ENCODE measurements at regions of chr4 and their contacts with region 1.

Region 1: DNA sequence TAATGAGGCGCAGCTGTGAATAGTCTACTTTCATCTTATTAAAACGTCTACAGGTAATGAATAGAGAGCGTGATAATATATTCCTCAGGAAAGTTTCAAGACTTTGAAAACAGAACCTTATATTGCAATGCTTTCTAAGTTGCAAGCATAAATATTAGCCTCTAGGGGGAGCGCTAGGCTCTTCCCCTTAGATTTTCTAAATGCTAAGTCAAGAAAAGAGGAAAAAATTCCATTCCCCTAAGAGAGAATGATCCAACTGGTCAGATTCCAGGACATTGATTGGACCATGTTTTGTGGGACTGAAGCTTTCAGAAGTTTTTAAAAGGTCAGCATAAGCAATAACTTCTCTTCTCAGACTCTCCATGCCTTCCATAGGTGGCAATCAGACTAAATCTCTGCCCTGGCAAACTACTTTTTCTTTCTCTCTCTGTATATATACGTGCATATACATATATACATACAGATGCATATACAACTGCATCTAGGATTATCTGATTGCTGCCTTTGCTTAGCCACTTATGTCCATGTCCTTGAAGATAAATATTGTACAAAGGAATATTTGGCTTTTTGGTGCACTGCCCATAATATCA is 492.9 kb downstream of the INPP4B start:
- DNase-seq: peak; percentile 65 to 73 (median 65)
- H3K4me3 ChIP-seq: peak overlapping the region in 1 of 7 experiments; percentile 55
- H3K27ac ChIP-seq: no peak overlapping the region
- H3K4me1 ChIP-seq: peaks cover 15 to 42% (median 21%) of the 10 kb centered on the region in 4 experiments
- H3K27me3 ChIP-seq: no peaks in the 10 kb centered on the region

Region 2: GRCh38 chr4:141933978-141934377 is 419.3 kb before region 1 on chr4:
- CTCF ChIA-PET with region 1: no interaction called
- POLR2A ChIA-PET with region 1: no interaction called
- DNase-seq: no peak
- H3K4me3 ChIP-seq: no peak overlapping the region
- H3K27ac ChIP-seq: no peak overlapping the region
- H3K4me1 ChIP-seq: no peaks in the 10 kb centered on the region
- H3K27me3 ChIP-seq: no peaks in the 10 kb centered on the region

Region 3: DNA sequence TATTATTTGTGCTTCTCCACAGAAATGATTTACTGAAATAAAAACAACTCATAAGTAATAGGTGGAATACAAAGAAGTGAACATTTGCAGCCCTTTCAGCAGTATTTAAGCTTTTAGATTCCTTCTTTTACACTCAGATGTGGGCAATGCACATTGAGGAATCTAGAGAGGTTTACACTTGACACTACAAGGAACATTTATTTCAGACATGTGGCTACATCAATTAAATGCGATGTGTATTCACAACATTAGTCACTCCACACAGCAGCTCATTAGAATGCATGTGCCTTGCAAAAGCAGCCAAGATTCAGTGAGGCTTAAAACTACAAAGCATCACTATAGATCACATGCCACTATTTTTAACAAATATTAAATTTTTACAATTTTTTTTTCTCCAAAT is 12.1 kb after region 1 on chr4:
- CTCF ChIA-PET with region 1: interaction called, 23 read pairs
- POLR2A ChIA-PET with region 1: no interaction called
- DNase-seq: no peak
- H3K4me3 ChIP-seq: no peak overlapping the region
- H3K27ac ChIP-seq: no peak overlapping the region
- H3K4me1 ChIP-seq: peaks cover 8 to 23% (median 18%) of the 10 kb centered on the region in 4 experiments
- H3K27me3 ChIP-seq: no peaks in the 10 kb centered on the region

Region 4: GRCh38 chr4:142719854-142720541 is 366.8 kb after region 1 on chr4:
- CTCF ChIA-PET with region 1: interaction called, 19 read pairs
- POLR2A ChIA-PET with region 1: no interaction called
- DNase-seq: peak; percentile 45 to 67 (median 64)
- H3K4me3 ChIP-seq: no peak overlapping the region
- H3K27ac ChIP-seq: no peak overlapping the region
- H3K4me1 ChIP-seq: peaks cover 0 to 7% (median under 1%) of the 10 kb centered on the region in 4 experiments
- H3K27me3 ChIP-seq: no peaks in the 10 kb centered on the region